A673 (cell line): ENCODE measurements at regions of chr11 and their contacts with region 1.

Region 1: GRCh38 chr11:9573052-9573774 is at the start of gene WEE1:
- DNase-seq: peak; percentile 98
- H3K4me3 ChIP-seq: peak within 1 kb of the TSS; percentile 74
- H3K27ac ChIP-seq: peak within 1 kb of the TSS; percentile 95
- H3K4me1 ChIP-seq: peaks cover 15% of the 10 kb centered on the region
- H3K27me3 ChIP-seq: no peaks in the 10 kb centered on the region
- CTCF ChIP-seq: no peak
- total RNA-seq, gene WEE1: 51.4 and 54.9 TPM in 2 replicates

Region 2: GRCh38 chr11:9489080-9489765 is 84.0 kb before region 1 on chr11:
- CTCF ChIA-PET with region 1: no interaction called
- POLR2A ChIA-PET with region 1: interaction called, 11 read pairs
- intact Hi-C with region 1: no loop called
- DNase-seq: no peak
- H3K4me3 ChIP-seq: no peak overlapping the region
- H3K27ac ChIP-seq: no peak overlapping the region
- H3K4me1 ChIP-seq: peaks cover 9% of the 10 kb centered on the region
- H3K27me3 ChIP-seq: no peaks in the 10 kb centered on the region
- CTCF ChIP-seq: no peak

Region 3: DNA sequence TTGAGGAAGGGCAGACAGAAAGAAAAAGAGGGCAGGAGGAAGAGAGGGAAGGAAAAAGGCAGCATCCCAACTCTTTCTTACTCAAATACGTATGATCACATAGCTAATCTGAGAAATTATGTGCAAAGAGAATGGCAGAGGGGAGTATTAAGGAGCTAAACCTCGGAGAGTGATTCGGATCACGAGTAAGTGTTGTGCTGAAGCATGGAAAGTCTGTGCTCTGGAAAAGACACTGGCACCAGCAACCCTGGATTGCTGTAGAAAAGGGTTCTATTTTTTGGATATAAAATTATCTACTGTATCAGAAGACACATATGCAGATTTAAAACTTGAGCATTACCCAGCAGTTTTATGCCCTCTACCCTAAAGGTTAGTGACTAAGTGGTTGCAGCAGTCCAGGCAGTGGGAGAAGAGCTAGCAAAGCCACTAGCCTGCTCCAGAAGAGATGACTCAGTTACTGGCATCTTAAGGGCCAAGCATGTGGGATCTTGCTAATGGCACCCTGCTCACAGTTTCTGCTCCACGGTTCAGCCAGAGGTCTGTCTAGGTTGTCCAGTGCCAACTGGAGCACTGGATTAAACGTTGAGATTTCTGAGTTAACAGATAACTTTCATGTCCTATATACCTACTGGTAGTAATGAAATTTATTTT is 242.4 kb after region 1 on chr11:
- CTCF ChIA-PET with region 1: no interaction called
- POLR2A ChIA-PET with region 1: no interaction called
- intact Hi-C with region 1: no loop called
- DNase-seq: no peak
- H3K4me3 ChIP-seq: no peak overlapping the region
- H3K27ac ChIP-seq: no peak overlapping the region
- H3K4me1 ChIP-seq: no peaks in the 10 kb centered on the region
- H3K27me3 ChIP-seq: no peaks in the 10 kb centered on the region
- CTCF ChIP-seq: no peak